Activated B cell treated with CpG ODN at 0.5 μM for 24 hours (primary cell): ENCODE measurements at regions of chr18 and their contacts with region 1.

Region 1: GRCh38 chr18:36067055-36067957 is at the start of gene RPRD1A:
- DNase-seq: peak; percentile 99
- ATAC-seq: peak; percentile 91
- H3K4me3 Mint-ChIP-seq: peak within 1 kb of the TSS; percentile 93
- H3K27ac Mint-ChIP-seq: peak within 1 kb of the TSS; percentile 88
- H3K4me1 Mint-ChIP-seq: peaks cover 44% of the 10 kb centered on the region
- H3K27me3 Mint-ChIP-seq: no peaks in the 10 kb centered on the region
- CTCF ChIP-seq: no peak
- total RNA-seq, gene RPRD1A: 40.7 and 47.6 TPM in 2 replicates

Region 2: DNA sequence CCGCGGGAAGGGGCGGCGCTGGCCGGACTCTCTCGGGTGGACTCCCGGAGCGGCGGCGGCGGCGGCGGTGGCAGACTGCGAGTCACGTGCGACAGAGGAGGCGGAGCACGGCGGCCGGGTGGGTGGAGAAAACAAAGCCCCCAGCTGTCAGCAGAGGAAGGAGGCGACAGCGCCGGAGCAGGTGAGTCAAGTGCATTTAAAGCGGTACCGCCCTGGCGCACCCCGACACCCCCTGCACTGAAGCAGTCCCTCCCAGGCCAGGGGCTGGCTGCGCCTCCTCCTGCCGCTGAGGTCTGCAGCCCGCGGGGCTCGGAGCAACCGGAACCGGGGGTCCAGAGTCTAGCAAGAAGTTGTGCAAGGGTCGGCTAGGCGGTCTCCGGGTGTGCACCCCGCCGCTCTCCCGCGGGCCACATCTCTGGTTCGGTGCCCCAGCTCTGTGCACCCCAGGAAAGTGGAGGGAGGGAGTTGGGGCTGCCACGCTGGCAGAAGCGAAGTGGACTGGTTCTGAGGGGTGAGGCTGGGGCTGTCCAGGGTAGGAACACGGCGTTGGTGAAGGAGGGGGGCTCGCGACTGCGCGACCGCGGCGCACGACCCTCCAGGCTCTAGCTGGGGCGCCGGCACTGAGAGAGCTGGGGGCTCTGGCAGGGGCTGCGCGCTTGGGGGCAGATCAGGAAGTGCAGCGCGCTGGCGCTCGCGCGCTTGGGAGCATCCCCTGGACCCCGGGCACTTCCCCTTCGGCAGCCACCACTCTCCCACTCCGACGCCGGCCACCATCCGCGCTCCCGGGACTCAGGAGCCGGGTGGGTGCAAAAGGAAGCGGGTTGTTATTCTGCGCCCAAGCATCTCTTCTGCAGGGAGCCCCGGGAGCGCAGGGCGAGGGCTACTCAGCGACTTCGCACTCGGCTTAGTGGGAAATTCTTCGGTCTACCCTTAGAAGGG is 1090.1 kb before region 1 on chr18:
- CTCF ChIA-PET with region 1: no interaction called
- POLR2A ChIA-PET with region 1: no interaction called
- intact Hi-C with region 1: loop called (anchors 5 kb)
- DNase-seq: peak; percentile 77
- ATAC-seq: peak; percentile 76
- H3K4me3 Mint-ChIP-seq: peak overlapping the region; percentile 89
- H3K27ac Mint-ChIP-seq: no peak overlapping the region
- H3K4me1 Mint-ChIP-seq: peaks cover 23% of the 10 kb centered on the region
- H3K27me3 Mint-ChIP-seq: peaks cover 18% of the 10 kb centered on the region
- CTCF ChIP-seq: no peak

Region 3: DNA sequence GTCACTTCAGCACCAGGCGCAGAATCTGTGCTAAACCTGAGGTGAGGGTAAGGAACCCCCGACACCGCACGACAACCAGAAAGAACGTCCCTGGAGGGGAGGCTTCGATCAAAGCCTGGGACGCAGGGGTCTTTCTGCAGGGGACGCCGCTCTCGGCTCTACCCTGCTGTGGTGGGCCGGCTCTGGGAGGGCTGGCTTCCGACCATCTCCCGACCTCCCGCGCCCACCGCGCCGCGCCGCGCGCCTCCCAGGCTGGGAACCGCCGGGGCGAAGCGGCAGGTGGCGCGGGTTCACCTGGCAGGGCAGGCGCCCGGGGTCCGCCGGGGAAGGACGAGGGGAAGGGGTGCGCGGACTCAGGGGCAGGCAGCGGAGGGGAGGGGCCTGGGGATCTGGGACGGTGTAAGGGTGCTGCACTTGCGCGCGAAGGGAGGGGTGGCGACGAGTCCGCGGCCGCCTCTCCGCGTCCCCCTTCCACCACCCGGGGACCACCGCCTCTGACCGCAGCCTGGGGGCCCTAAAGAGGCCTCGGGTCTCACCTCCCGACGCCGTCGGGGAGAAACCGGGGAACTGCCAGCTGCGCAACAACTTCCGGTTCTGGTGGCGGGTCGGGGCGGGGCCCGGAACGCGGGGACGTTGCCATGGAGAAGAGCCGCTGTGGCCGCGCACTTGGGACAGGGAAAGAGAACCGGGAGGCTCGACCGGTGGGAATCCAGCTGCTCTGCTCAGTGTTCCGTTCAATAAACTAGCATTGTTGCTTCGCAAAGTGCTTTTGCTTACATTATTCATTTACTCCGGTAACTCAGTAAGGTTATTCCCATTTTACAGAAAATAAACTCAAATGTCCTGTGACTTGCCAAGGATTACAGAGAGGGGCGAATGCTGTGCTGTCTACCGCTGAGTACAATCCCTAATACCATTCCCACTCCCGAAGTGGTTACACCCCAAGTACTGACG is 690.3 kb before region 1 on chr18 and contains the start of gene ZNF396:
- CTCF ChIA-PET with region 1: no interaction called
- POLR2A ChIA-PET with region 1: no interaction called
- intact Hi-C with region 1: loop called (anchors 5 kb)
- DNase-seq: peak; percentile 68
- ATAC-seq: peak; percentile 72
- H3K4me3 Mint-ChIP-seq: peak within 1 kb of the TSS; percentile 89
- H3K27ac Mint-ChIP-seq: peak within 1 kb of the TSS; percentile 47
- H3K4me1 Mint-ChIP-seq: peaks cover 11% of the 10 kb centered on the region
- H3K27me3 Mint-ChIP-seq: no peaks in the 10 kb centered on the region
- CTCF ChIP-seq: no peak
- total RNA-seq, gene ZNF396: 1.5 and 2.2 TPM in 2 replicates

Region 4: DNA sequence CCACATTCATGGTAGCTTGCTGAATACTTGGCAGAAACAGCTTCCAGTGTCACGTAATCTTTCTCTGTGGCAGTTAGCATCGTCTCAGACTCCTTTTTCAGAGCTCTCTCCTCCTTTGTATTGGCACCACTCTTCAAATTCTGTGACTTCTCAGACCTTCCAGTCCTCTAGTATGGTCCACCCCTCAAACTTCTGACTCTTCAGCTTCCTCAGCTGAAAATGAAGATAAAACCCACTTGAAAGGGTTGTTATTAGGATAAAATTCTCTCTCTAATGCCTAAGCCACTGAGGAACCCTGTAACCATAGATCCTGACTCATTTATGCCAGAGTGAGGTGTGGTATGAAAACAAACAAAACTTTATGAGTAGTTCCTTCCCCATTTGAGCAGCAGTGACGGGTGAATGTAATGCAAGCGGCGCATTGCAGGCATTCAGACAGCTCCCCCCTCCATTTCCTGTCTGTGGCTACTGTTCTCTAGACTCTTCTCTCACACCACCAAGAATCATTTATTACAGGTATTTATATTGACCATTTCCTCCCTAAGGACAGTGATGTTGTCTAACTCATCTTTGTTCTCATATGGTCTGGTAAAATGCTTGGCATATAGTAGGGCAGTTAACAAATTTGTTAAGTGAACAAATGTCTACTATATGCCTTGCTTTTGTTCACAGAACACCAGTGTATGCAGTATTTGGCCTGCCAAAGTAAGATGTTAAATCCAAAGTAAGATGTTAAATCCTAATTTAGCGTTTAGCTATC is 450.5 kb before region 1 on chr18:
- CTCF ChIA-PET with region 1: no interaction called
- POLR2A ChIA-PET with region 1: no interaction called
- intact Hi-C with region 1: loop called (anchors 10 kb)
- DNase-seq: peak; percentile 24
- ATAC-seq: peak; percentile 93
- H3K4me3 Mint-ChIP-seq: no peak overlapping the region
- H3K27ac Mint-ChIP-seq: no peak overlapping the region
- H3K4me1 Mint-ChIP-seq: peaks cover 12% of the 10 kb centered on the region
- H3K27me3 Mint-ChIP-seq: no peaks in the 10 kb centered on the region
- CTCF ChIP-seq: no peak

Region 5: DNA sequence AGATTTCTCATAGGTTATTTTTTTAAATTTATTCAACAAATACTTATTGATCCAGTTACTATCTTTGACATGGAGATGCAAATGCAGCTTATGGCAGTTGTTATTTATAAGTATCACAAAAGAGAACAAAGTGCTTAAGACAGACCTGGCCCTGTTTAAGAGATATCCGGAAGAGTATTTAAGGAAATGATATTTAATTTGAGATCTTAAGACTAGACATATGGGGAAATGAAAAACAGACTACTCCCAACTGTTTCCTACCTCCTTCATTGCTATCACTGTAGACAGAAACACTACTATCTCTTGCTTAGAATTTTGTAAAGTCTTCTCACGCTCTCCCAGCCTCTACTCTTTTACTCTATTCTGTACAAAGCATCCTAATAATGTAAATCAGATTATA is 35.9 kb before region 1 on chr18:
- CTCF ChIA-PET with region 1: no interaction called
- POLR2A ChIA-PET with region 1: no interaction called
- intact Hi-C with region 1: loop called (anchors 5 kb)
- DNase-seq: no peak
- ATAC-seq: peak; percentile 62
- H3K4me3 Mint-ChIP-seq: peak overlapping the region; percentile 48
- H3K27ac Mint-ChIP-seq: peak overlapping the region; percentile 72
- H3K4me1 Mint-ChIP-seq: peaks cover 49% of the 10 kb centered on the region
- H3K27me3 Mint-ChIP-seq: no peaks in the 10 kb centered on the region
- CTCF ChIP-seq: no peak

Region 6: GRCh38 chr18:36083729-36084128 is 16.4 kb after region 1 on chr18:
- CTCF ChIA-PET with region 1: no interaction called
- POLR2A ChIA-PET with region 1: interaction called, 3 read pairs
- intact Hi-C with region 1: loop called (anchors 2 kb)
- DNase-seq: no peak
- ATAC-seq: peak; percentile 34
- H3K4me3 Mint-ChIP-seq: no peak overlapping the region
- H3K27ac Mint-ChIP-seq: no peak overlapping the region
- H3K4me1 Mint-ChIP-seq: peaks cover 28% of the 10 kb centered on the region
- H3K27me3 Mint-ChIP-seq: no peaks in the 10 kb centered on the region
- CTCF ChIP-seq: no peak